Activated CD8-positive, alpha-beta T cell treated with anti-CD3 and anti-CD28 coated beads, Interleukin-2, amount 10 ng/mL, durations not matched to agents 7 days and 5 days (primary cell): ENCODE measurements at regions of chr15 and their contacts with region 1.

Region 1: GRCh38 chr15:80058851-80059785 is at the start of gene ZFAND6:
- DNase-seq: peak; percentile 96
- ATAC-seq: peak; percentile 87
- H3K4me3 Mint-ChIP-seq: peak within 1 kb of the TSS; percentile 84
- H3K27ac Mint-ChIP-seq: peak within 1 kb of the TSS; percentile 96
- H3K4me1 Mint-ChIP-seq: peaks cover 42% of the 10 kb centered on the region
- H3K27me3 Mint-ChIP-seq: peaks cover 3% of the 10 kb centered on the region
- total RNA-seq, gene ZFAND6: 49.9 to 53.1 TPM

Region 2: DNA sequence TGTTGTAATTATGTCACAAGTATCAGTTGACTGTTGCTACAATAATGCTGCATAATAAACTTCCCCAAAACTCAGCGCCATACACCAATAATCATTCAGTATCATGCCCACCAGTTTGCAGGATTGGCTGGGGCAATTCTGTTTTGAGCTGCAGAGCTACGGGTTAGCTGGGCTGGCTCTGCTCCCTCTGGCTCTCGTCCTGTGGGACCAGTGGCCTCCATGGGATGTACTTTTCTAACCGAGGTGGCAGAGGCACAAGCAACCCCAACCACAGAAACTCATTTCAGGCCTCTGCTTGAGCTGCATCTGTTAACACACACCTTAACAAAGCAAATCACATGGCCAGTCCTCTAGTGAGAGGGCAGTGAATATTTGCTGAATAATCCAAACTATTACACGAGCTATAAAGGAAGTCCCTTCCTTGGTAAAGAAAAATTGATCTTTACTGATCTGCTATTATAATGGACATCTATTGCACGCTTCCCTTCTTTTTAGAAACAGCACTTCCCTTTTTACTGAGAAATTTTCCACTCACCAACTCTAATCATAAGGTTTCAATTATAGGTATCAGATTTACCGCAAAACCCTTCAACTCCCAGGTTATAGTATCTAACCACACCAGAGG is 77.2 kb before region 1 on chr15:
- CTCF ChIA-PET with region 1: no interaction called
- POLR2A ChIA-PET with region 1: no interaction called
- DNase-seq: no peak
- ATAC-seq: no peak
- H3K4me3 Mint-ChIP-seq: no peak overlapping the region
- H3K27ac Mint-ChIP-seq: no peak overlapping the region
- H3K4me1 Mint-ChIP-seq: peaks cover 14% of the 10 kb centered on the region
- H3K27me3 Mint-ChIP-seq: no peaks in the 10 kb centered on the region

Region 3: GRCh38 chr15:80072285-80072994 is 13.3 kb after region 1 on chr15:
- CTCF ChIA-PET with region 1: interaction called, 22 read pairs
- POLR2A ChIA-PET with region 1: interaction called, 6 read pairs
- DNase-seq: peak; percentile 56
- ATAC-seq: peak; percentile 99
- H3K4me3 Mint-ChIP-seq: peak overlapping the region; percentile 93
- H3K27ac Mint-ChIP-seq: peak overlapping the region; percentile 84
- H3K4me1 Mint-ChIP-seq: peaks cover 50% of the 10 kb centered on the region
- H3K27me3 Mint-ChIP-seq: no peaks in the 10 kb centered on the region